ENCODE measurements at regions of chr12 and their contacts with region 1.

Region 1: GRCh38 chr12:4030929-4031702 is 157.9 kb upstream of the PARP11 start:
- DNase-seq: peak; percentile 69
- H3K4me3 Mint-ChIP-seq: peak overlapping the region; percentile 62
- H3K27ac Mint-ChIP-seq: no peak overlapping the region
- H3K4me1 Mint-ChIP-seq: peaks cover 22% of the 10 kb centered on the region
- H3K27me3 Mint-ChIP-seq: peaks cover 17% of the 10 kb centered on the region

Region 2: DNA sequence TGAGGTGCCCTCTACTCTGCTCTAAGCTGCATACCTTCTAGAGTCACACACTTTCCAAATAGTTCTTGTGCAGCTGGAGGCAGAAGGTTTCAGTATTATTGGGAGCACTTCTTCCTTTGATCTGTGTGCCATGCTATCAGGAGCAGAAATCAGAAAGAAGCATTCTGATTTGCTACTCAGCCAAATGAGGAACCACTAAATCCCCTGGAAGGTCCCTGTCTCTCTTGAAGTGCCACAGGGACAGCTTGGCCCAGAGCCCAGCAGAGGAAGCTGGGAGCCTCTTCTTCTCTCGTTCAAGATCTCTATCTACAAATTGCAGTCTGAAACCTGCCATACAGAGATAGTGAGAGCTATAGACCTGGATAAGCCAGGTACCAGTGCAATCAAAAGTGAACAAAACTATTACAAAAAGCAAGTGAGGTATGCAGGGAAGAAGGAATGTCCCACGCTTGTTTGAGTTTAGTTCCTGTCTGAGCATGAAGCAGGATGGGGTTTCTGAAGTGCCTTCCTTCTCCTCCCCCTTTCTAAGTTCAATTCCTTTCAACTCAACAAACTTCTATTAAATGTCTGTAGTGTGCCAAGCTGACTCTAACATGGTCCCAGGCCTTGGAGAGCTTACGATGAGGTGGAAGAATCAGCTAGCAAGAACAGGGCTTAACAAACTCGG is 57.0 kb before region 1 on chr12:
- intact Hi-C with region 1: loop called (anchors 2 kb)
- DNase-seq: no peak
- H3K4me3 Mint-ChIP-seq: peak overlapping the region; percentile 49
- H3K27ac Mint-ChIP-seq: peak overlapping the region; percentile 56
- H3K4me1 Mint-ChIP-seq: peaks cover 56% of the 10 kb centered on the region
- H3K27me3 Mint-ChIP-seq: no peaks in the 10 kb centered on the region

Region 3: DNA sequence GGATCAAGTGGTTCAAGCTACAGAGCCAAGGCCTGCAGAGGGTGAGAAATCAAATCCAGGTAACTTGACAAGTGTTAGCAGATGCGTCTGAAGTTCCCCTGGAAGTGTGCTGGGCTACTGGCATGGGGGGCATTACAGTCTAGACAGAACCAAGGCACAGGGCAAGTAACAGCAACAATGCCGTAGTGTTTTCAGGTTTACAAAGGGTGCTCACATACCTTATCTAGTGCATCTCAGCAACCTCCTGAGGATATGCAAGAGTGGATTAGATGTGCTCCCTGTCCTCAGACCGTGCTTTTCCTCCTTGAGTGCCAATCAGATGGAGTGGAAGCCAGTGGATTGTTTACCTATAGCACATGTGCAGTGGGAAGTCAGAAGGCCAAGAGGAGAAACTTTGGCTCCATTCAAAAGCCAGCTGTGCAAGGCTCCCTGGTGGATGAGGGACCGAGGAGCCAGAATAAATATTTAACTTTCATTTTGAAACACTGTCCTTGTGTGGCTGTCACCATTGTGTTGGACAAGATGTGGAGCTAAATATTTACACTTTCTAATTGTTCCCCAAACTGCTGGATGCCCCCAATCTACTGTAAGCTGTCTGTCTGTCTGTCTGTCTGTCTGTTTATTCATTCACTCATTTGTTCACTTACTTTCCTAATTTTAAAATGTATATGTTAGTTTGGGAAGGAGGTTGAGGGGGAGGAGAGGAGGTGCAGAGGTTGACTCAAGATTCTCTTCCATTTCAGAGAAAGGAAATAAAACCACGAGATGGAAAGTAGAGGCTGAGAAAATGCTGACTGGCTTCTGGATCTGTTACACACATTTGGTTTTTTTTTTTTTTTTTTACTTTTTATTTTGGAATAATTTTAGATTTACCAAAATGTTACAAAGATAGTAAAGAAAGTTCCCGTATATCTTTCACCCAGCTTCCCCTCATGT is 26.1 kb after region 1 on chr12:
- intact Hi-C with region 1: loop called (anchors 2 kb)
- DNase-seq: no peak
- H3K4me3 Mint-ChIP-seq: no peak overlapping the region
- H3K27ac Mint-ChIP-seq: peak overlapping the region; percentile 21
- H3K4me1 Mint-ChIP-seq: peaks cover 27% of the 10 kb centered on the region
- H3K27me3 Mint-ChIP-seq: peaks cover 9% of the 10 kb centered on the region

Region 4: GRCh38 chr12:4099276-4099675 is 68.2 kb after region 1 on chr12:
- intact Hi-C with region 1: no loop called
- DNase-seq: no peak
- H3K4me3 Mint-ChIP-seq: no peak overlapping the region
- H3K27ac Mint-ChIP-seq: no peak overlapping the region
- H3K4me1 Mint-ChIP-seq: peaks cover 10% of the 10 kb centered on the region
- H3K27me3 Mint-ChIP-seq: peaks cover 8% of the 10 kb centered on the region